Natural killer cell (primary cell): ENCODE measurements at regions of chr1 and their contacts with region 1.

Region 1: DNA sequence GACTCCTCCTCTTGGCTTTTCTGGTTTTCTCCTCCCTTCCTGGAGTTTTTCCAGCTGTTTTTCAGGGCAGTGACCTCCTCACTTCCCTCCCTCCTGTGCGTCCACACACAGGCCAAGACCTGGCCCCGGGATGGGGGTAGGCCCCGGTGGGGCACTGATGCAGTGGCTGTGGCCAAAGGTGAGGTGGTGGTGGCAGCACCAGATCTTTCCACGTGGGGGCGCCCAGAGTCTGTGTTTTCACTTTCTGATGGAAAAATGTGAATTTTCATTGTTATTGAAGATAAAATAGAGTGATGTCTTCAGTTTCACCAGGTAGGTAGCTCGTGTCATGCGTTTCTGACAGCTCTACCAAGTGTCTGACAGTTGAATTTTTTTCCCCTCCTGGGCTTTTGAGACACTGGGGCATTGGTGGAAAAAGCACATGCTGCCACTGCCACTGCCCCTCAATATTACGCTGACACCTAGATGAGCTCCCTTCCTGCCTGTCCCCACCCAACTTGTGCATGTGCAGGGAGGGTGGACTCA is 39.9 kb upstream of the MAGOH start:
- DNase-seq: peak; percentile 68 to 75
- ATAC-seq: peak; percentile 69 to 89 (median 82)
- H3K4me3 ChIP-seq: no peak overlapping the region
- H3K4me3 Mint-ChIP-seq: no peak overlapping the region
- H3K27ac ChIP-seq: no peak overlapping the region
- H3K27ac Mint-ChIP-seq: peak overlapping the region in 1 of 2 donors; percentile 35
- H3K4me1 ChIP-seq: no peaks in the 10 kb centered on the region
- H3K4me1 Mint-ChIP-seq: peaks cover 5 to 6% of the 10 kb centered on the region in 2 donors
- H3K27me3 ChIP-seq: no peaks in the 10 kb centered on the region
- H3K27me3 Mint-ChIP-seq: no peaks in the 10 kb centered on the region
- CTCF ChIP-seq: peak; percentile 96

Region 2: GRCh38 chr1:52928015-52928404 is 350.3 kb before region 1 on chr1:
- intact Hi-C with region 1: no loop called
- DNase-seq: peak in 1 of 2 donors; percentile 42
- ATAC-seq: no peak
- H3K4me3 ChIP-seq: peak overlapping the region; percentile 64
- H3K4me3 Mint-ChIP-seq: peak overlapping the region; percentile 92
- H3K27ac ChIP-seq: no peak overlapping the region
- H3K27ac Mint-ChIP-seq: peak overlapping the region; percentile 52 to 86
- H3K4me1 ChIP-seq: peaks cover 18% of the 10 kb centered on the region
- H3K4me1 Mint-ChIP-seq: peaks cover 11 to 25% of the 10 kb centered on the region in 2 donors
- H3K27me3 ChIP-seq: no peaks in the 10 kb centered on the region
- H3K27me3 Mint-ChIP-seq: peaks cover 0 to 21% of the 10 kb centered on the region in 2 donors
- CTCF ChIP-seq: no peak

Region 3: GRCh38 chr1:53393325-53393792 is 115.1 kb after region 1 on chr1:
- intact Hi-C with region 1: loop called (anchors 1 kb)
- DNase-seq: peak; percentile 71 to 78
- ATAC-seq: peak; percentile 60 to 74 (median 70)
- H3K4me3 ChIP-seq: no peak overlapping the region
- H3K4me3 Mint-ChIP-seq: no peak overlapping the region
- H3K27ac ChIP-seq: no peak overlapping the region
- H3K27ac Mint-ChIP-seq: no peak overlapping the region
- H3K4me1 ChIP-seq: peaks cover 12% of the 10 kb centered on the region
- H3K4me1 Mint-ChIP-seq: no peaks in the 10 kb centered on the region
- H3K27me3 ChIP-seq: no peaks in the 10 kb centered on the region
- H3K27me3 Mint-ChIP-seq: peaks cover 0 to 4% of the 10 kb centered on the region in 2 donors
- CTCF ChIP-seq: peak; percentile 89

Region 4: GRCh38 chr1:53470155-53470554 is 191.9 kb after region 1 on chr1:
- intact Hi-C with region 1: loop called (anchors 5 kb)
- DNase-seq: no peak
- ATAC-seq: no peak
- H3K4me3 ChIP-seq: no peak overlapping the region
- H3K4me3 Mint-ChIP-seq: no peak overlapping the region
- H3K27ac ChIP-seq: no peak overlapping the region
- H3K27ac Mint-ChIP-seq: no peak overlapping the region
- H3K4me1 ChIP-seq: peaks cover 3% of the 10 kb centered on the region
- H3K4me1 Mint-ChIP-seq: no peaks in the 10 kb centered on the region
- H3K27me3 ChIP-seq: no peaks in the 10 kb centered on the region
- H3K27me3 Mint-ChIP-seq: peaks cover 0 to 3% of the 10 kb centered on the region in 2 donors
- CTCF ChIP-seq: no peak

Region 5: GRCh38 chr1:53754484-53755312 is 476.4 kb after region 1 on chr1:
- intact Hi-C with region 1: loop called (anchors 2 kb)
- DNase-seq: peak in 1 of 2 donors; percentile 58
- ATAC-seq: peak in 1 of 3 donors; percentile 65
- H3K4me3 ChIP-seq: no peak overlapping the region
- H3K4me3 Mint-ChIP-seq: no peak overlapping the region
- H3K27ac ChIP-seq: no peak overlapping the region
- H3K27ac Mint-ChIP-seq: no peak overlapping the region
- H3K4me1 ChIP-seq: no peaks in the 10 kb centered on the region
- H3K4me1 Mint-ChIP-seq: no peaks in the 10 kb centered on the region
- H3K27me3 ChIP-seq: no peaks in the 10 kb centered on the region
- H3K27me3 Mint-ChIP-seq: no peaks in the 10 kb centered on the region
- CTCF ChIP-seq: peak; percentile 70